Right ventricle myocardium superior (tissue), 1 donor: ENCODE measurements at regions of chr13 and their contacts with region 1.

Region 1: GRCh38 chr13:90365130-90365529 is 982.4 kb upstream of the MIR17HG start:
- DNase-seq: no peak
- ATAC-seq: peak; percentile 41

Region 2: DNA sequence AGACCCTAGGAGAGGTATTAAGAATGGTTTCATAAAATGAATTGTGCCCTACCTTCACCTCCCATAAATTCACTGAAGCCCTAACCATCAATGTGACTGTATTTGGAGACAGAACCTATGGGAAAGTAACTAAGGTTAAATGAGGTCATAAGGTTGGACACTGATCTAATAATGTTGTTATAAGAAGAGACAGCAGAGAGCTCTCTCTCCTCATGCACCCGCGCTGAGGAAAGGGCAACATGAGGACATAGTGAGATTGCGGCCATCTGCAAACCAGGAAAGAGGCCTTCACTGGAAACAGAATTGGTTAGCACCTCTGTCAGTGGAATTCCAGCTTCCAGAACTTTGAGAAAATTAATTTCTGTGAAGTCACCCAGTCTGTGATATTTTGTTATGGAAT is 413.8 kb before region 1 on chr13:
- intact Hi-C with region 1: loop called (anchors 10 kb)
- DNase-seq: no peak
- ATAC-seq: peak; percentile 72

Region 3: GRCh38 chr13:90084684-90085290 is 280.3 kb before region 1 on chr13:
- intact Hi-C with region 1: loop called (anchors 10 kb)
- DNase-seq: no peak
- ATAC-seq: no peak